ENCODE measurements at regions of chr13 and their contacts with region 1.

Region 1: GRCh38 chr13:111153279-111153976 is 38.3 kb downstream of the ARHGEF7 start:
- DNase-seq: peak; percentile 91 to 99 (median 94)

Region 2: DNA sequence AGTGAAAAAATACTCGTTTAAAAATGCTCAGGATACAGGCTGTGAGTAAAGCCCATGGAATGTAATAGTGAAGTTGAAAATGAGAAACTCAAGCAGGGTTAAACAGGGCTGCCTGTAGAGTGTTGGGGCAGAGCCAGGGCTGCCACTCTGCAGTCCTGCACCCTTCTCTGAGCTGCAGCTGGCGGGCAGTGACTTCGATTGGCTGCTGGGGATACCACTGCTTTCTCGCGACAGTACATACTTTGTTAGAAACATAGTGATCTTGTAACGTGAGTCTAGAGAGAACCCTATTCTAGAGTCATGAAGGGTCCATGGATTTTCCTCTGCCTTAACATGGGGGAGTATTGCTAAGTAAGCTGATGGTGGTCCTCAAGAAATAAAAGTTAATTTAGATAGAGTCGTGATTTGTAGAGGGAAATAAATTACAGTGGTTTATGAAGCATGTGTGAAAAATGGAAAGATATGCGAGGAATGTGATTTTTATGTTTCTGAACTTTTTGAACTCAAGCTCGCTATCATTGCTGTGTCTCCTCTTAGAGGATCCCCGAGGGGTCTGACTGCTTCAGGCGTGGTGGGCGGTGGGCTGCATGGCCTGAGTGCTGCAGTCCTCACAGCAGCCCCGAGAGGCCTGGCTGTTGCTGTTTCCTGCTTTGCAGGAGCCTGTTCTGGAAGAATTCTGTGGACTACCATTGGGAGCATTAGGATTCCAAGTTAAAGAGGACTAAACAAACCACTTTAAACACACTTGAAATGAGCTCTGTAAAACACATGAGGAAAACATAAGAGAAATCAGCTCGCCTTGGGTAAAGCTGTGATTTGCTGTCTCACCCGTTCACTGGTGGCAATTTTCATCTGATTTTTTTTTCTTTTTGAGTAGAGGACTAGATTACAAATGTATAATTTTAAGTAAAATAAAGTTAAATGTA is 57.4 kb after region 1 on chr13:
- intact Hi-C with region 1: loop called (anchors 5 kb)
- DNase-seq: peak in 9 of 10 donors; percentile 52 to 96 (median 75)

Measured in posterior cingulate gyrus (tissue), 11 donors.